ENCODE measurements at regions of chr3 and their contacts with region 1.

Region 1: DNA sequence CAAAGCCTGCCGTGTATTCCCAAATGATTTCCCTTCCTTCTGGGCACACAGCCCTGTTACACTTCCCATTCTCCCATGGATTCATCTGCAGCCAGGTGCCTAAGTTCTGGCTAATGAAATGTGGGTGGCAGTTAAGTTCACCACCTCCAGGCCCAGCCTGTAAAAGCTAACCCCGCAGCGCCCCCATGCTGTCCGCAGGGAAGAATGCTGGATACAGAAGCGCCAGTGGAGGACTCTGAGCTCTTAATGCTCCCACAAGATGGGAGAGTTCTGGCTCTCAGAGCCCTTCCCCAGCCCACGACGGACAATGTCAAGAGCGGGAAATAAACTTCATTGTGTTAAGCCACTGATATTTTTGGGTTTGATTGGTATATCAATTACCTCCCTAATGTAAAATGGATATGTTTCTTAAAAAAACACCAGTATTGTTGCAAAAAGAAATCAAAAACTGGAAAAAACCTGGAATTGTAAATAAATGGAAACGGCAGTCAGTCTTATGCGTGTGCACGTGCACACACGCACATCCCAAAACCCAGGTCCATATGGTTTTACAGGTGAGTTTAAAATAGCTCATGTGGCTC is 37.7 kb upstream of the FGD5 start:
- DNase-seq: peak; percentile 62
- H3K4me3 ChIP-seq: no peak overlapping the region
- H3K27ac ChIP-seq: no peak overlapping the region
- H3K4me1 ChIP-seq: no peaks in the 10 kb centered on the region
- H3K27me3 ChIP-seq: peaks cover 6 to 14% of the 10 kb centered on the region in 2 experiments
- CTCF ChIP-seq: peak; percentile 63 to 74
- POLR2A ChIP-seq: no peak

Region 2: DNA sequence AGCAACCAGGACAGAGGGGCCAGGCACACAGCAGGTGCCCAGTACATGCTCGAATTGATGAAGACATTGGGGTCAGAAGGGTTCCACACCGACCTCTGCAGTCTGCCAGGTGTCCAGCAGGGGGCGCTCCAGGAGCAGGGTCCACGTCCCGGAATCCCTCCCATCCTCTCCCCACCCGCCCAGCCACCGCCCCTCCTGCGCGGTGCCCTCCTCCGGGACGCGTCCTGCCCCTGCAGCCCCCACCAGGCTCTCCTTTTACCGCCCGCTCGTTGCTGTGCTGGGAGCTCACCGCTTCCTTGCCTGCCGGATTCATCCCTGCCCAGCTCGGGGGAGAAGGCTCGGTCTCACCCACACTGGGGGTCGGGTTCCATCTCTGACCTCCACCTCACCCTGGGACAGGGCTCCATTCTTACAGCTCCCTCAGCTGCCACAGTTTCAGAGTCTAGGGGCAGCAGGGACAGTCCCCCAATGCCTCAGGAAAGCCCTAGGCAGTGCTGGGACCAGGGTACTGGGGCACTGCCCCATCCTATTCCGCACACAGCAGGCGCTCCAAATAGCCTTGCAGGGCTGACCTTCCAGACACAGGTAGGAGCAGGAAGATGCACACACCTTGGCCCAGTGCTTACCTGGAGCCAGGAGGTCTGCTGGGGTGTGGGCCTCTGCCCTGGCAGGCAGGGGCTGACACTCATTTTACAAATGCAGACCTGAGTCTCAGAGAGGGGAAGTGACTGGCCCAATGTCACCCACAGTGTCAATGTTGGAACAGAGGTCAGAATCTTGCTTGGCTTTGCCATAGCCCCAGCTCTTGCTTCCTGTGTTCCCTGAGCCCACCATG is 271.8 kb before region 1 on chr3:
- CTCF ChIA-PET with region 1: interaction called, 9 read pairs
- POLR2A ChIA-PET with region 1: no interaction called
- dilution Hi-C with region 1: no loop called
- intact Hi-C with region 1: loop called (anchors 10 kb)
- DNase-seq: peak; percentile 30
- H3K4me3 ChIP-seq: no peak overlapping the region
- H3K27ac ChIP-seq: no peak overlapping the region
- H3K4me1 ChIP-seq: no peaks in the 10 kb centered on the region
- H3K27me3 ChIP-seq: no peaks in the 10 kb centered on the region
- CTCF ChIP-seq: peak; percentile 66 to 94
- POLR2A ChIP-seq: no peak

Region 3: GRCh38 chr3:14633819-14634424 is 147.1 kb before region 1 on chr3:
- CTCF ChIA-PET with region 1: interaction called, 14 read pairs
- POLR2A ChIA-PET with region 1: no interaction called
- dilution Hi-C with region 1: no loop called
- intact Hi-C with region 1: loop called (anchors 1 kb)
- DNase-seq: peak; percentile 53
- H3K4me3 ChIP-seq: no peak overlapping the region
- H3K27ac ChIP-seq: peak overlapping the region; percentile 54
- H3K4me1 ChIP-seq: peaks cover 15% of the 10 kb centered on the region
- H3K27me3 ChIP-seq: peaks cover 0 to 2% of the 10 kb centered on the region in 2 experiments
- CTCF ChIP-seq: peak; percentile 76 to 83
- POLR2A ChIP-seq: no peak

Region 4: GRCh38 chr3:14680716-14681115 is 100.3 kb before region 1 on chr3:
- CTCF ChIA-PET with region 1: interaction called, 126 read pairs
- POLR2A ChIA-PET with region 1: no interaction called
- dilution Hi-C with region 1: no loop called
- intact Hi-C with region 1: no loop called
- DNase-seq: peak; percentile 34
- H3K4me3 ChIP-seq: no peak overlapping the region
- H3K27ac ChIP-seq: no peak overlapping the region
- H3K4me1 ChIP-seq: no peaks in the 10 kb centered on the region
- H3K27me3 ChIP-seq: peaks cover 0 to 2% of the 10 kb centered on the region in 2 experiments
- CTCF ChIP-seq: no peak
- POLR2A ChIP-seq: no peak

Region 5: GRCh38 chr3:14847613-14848541 is 66.9 kb after region 1 on chr3:
- CTCF ChIA-PET with region 1: interaction called, 4 read pairs
- POLR2A ChIA-PET with region 1: no interaction called
- dilution Hi-C with region 1: loop called (anchors 10 kb)
- intact Hi-C with region 1: no loop called
- DNase-seq: peak; percentile 43
- H3K4me3 ChIP-seq: no peak overlapping the region
- H3K27ac ChIP-seq: peak overlapping the region; percentile 10
- H3K4me1 ChIP-seq: peaks cover 23% of the 10 kb centered on the region
- H3K27me3 ChIP-seq: no peaks in the 10 kb centered on the region
- CTCF ChIP-seq: no peak
- POLR2A ChIP-seq: no peak

Region 6: GRCh38 chr3:14863333-14864100 is 82.5 kb after region 1 on chr3:
- CTCF ChIA-PET with region 1: interaction called, 11 read pairs
- POLR2A ChIA-PET with region 1: no interaction called
- dilution Hi-C with region 1: no loop called
- intact Hi-C with region 1: no loop called
- DNase-seq: peak; percentile 40
- H3K4me3 ChIP-seq: no peak overlapping the region
- H3K27ac ChIP-seq: no peak overlapping the region
- H3K4me1 ChIP-seq: peaks cover 24% of the 10 kb centered on the region
- H3K27me3 ChIP-seq: no peaks in the 10 kb centered on the region
- CTCF ChIP-seq: peak; percentile 53 to 54
- POLR2A ChIP-seq: no peak

Region 7: GRCh38 chr3:14921078-14921616 is 140.1 kb after region 1 on chr3:
- CTCF ChIA-PET with region 1: interaction called, 19 read pairs
- POLR2A ChIA-PET with region 1: no interaction called
- dilution Hi-C with region 1: no loop called
- intact Hi-C with region 1: no loop called
- DNase-seq: peak; percentile 96
- H3K4me3 ChIP-seq: no peak overlapping the region
- H3K27ac ChIP-seq: no peak overlapping the region
- H3K4me1 ChIP-seq: peaks cover 4% of the 10 kb centered on the region
- H3K27me3 ChIP-seq: no peaks in the 10 kb centered on the region
- CTCF ChIP-seq: peak; percentile 93
- POLR2A ChIP-seq: no peak